B cell (primary cell): ENCODE measurements at regions of chr5 and their contacts with region 1.

Region 1: GRCh38 chr5:126837906-126838539 is 61.1 kb downstream of the LMNB1 start:
- DNase-seq: peak; percentile 51
- ATAC-seq: peak; percentile 45
- H3K4me3 ChIP-seq: no peak overlapping the region
- H3K4me3 Mint-ChIP-seq: no peak overlapping the region
- H3K27ac ChIP-seq: no peak overlapping the region
- H3K27ac Mint-ChIP-seq: no peak overlapping the region
- H3K4me1 ChIP-seq: no peaks in the 10 kb centered on the region
- H3K4me1 Mint-ChIP-seq: no peaks in the 10 kb centered on the region
- H3K27me3 ChIP-seq: no peaks in the 10 kb centered on the region
- H3K27me3 Mint-ChIP-seq: no peaks in the 10 kb centered on the region
- CTCF ChIP-seq: peak; percentile 66

Region 2: GRCh38 chr5:126988021-126988569 is 150.1 kb after region 1 on chr5:
- CTCF ChIA-PET with region 1: no interaction called
- POLR2A ChIA-PET with region 1: no interaction called
- intact Hi-C with region 1: no loop called
- DNase-seq: peak; percentile 85
- ATAC-seq: peak; percentile 87
- H3K4me3 ChIP-seq: peak overlapping the region; percentile 27 to 52 (median 42)
- H3K4me3 Mint-ChIP-seq: peak overlapping the region; percentile 88
- H3K27ac ChIP-seq: peak overlapping the region; percentile 91 to 94
- H3K27ac Mint-ChIP-seq: peak overlapping the region; percentile 97
- H3K4me1 ChIP-seq: peaks cover 71% of the 10 kb centered on the region in 2 donors
- H3K4me1 Mint-ChIP-seq: peaks cover 80% of the 10 kb centered on the region
- H3K27me3 ChIP-seq: no peaks in the 10 kb centered on the region
- H3K27me3 Mint-ChIP-seq: no peaks in the 10 kb centered on the region
- CTCF ChIP-seq: no peak

Region 3: GRCh38 chr5:127040796-127041520 is 202.9 kb after region 1 on chr5:
- CTCF ChIA-PET with region 1: interaction called, 9 read pairs
- POLR2A ChIA-PET with region 1: no interaction called
- intact Hi-C with region 1: loop called (anchors 2 kb)
- DNase-seq: no peak
- ATAC-seq: no peak
- H3K4me3 ChIP-seq: no peak overlapping the region
- H3K4me3 Mint-ChIP-seq: no peak overlapping the region
- H3K27ac ChIP-seq: no peak overlapping the region
- H3K27ac Mint-ChIP-seq: no peak overlapping the region
- H3K4me1 ChIP-seq: no peaks in the 10 kb centered on the region
- H3K4me1 Mint-ChIP-seq: peaks cover 6% of the 10 kb centered on the region
- H3K27me3 ChIP-seq: no peaks in the 10 kb centered on the region
- H3K27me3 Mint-ChIP-seq: no peaks in the 10 kb centered on the region
- CTCF ChIP-seq: no peak

Region 4: GRCh38 chr5:127441799-127442484 is 603.9 kb after region 1 on chr5:
- CTCF ChIA-PET with region 1: no interaction called
- POLR2A ChIA-PET with region 1: no interaction called
- intact Hi-C with region 1: loop called (anchors 5 kb)
- DNase-seq: no peak
- ATAC-seq: no peak
- H3K4me3 ChIP-seq: no peak overlapping the region
- H3K4me3 Mint-ChIP-seq: no peak overlapping the region
- H3K27ac ChIP-seq: no peak overlapping the region
- H3K27ac Mint-ChIP-seq: no peak overlapping the region
- H3K4me1 ChIP-seq: no peaks in the 10 kb centered on the region
- H3K4me1 Mint-ChIP-seq: no peaks in the 10 kb centered on the region
- H3K27me3 ChIP-seq: no peaks in the 10 kb centered on the region
- H3K27me3 Mint-ChIP-seq: peaks cover 14% of the 10 kb centered on the region
- CTCF ChIP-seq: peak; percentile 39